B cell (primary cell): ENCODE measurements at regions of chr19 and their contacts with region 1.

Region 1: DNA sequence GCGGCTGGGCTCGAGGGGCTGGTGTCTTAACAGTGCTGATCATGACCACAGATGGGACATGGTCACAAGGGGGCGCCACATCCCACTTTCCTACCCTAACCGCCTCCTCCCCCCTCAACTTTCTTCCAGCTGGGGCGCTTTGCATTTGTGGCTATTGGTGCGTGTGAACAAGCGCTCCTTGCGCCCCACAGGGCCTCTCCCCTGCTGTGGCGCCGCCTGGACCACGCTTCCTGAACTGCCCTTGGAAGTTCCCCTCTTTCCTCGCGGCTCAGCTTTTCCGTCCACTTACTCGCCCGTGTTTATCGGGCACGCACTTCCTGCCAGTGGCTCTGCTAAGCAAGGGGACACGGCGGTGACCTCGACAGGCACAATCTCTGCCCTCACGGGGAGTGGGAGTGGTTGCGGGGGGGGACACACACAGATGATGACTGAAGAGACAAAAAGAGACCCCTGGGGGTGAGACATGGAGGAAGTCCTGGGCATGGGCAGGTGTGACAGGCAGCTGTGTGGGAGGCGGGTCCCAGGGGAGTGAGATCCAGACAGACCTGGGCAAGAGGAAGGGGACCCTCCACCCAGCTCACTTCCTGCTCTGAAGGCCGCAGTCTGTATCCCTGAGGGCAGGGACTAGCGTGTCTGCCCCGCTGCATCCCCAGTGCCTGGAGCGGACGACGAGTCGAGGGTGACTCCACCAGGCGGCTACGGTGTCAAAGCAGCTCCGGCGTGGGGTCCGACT is 40.3 kb downstream of the ZNF787 start:
- DNase-seq: peak; percentile 88
- ATAC-seq: peak; percentile 78
- H3K4me3 ChIP-seq: peak overlapping the region; percentile 13 to 74 (median 45)
- H3K4me3 Mint-ChIP-seq: peak overlapping the region; percentile 95
- H3K27ac ChIP-seq: no peak overlapping the region
- H3K27ac Mint-ChIP-seq: peak overlapping the region; percentile 75
- H3K4me1 ChIP-seq: peaks cover 12 to 16% of the 10 kb centered on the region in 2 donors
- H3K4me1 Mint-ChIP-seq: peaks cover 12% of the 10 kb centered on the region
- H3K27me3 ChIP-seq: no peaks in the 10 kb centered on the region
- H3K27me3 Mint-ChIP-seq: no peaks in the 10 kb centered on the region
- CTCF ChIP-seq: peak; percentile 70

Region 2: DNA sequence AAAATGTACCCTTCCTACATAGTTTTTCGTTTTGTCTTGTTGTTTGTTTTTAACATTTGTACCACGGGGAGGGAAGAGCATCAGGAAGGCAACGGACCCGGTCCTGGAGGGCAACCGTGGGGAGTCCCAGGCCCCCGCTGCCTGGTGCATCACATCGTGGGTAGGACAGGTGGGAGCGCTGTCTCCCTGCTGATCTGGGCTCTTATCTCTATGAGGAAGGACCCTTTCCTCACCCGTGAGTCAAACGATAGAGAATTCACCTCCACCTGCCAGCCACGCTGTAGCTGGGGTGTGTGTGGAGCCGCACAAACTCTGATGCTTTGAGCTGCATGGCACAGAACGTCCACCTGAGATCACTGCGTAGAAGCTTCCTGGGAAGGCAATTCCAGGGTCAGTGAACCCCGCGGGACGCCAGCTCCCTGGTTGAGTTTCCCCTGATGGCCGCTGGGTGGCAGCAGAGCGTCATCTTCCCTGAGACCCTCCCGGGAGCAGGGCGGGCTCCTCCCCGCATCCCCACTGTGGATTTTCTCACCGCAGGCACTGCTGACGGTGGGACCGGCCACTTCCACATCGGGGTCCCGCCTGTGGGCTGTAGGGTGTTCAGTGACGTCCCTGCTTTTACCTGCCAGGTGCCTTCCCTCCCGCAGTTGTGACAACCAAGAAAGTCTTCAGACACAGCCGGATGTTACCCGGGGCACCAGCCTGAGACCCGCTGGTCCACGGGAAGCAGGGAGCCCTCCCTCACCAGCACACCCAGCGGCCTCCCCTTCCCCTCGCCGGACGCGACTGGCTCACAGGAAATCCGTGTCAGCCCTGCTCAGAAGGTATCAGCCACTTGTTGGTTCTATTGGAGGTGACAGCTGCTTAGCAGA is 14.4 kb before region 1 on chr19:
- CTCF ChIA-PET with region 1: interaction called, 24 read pairs
- POLR2A ChIA-PET with region 1: no interaction called
- intact Hi-C with region 1: no loop called
- DNase-seq: peak; percentile 77
- ATAC-seq: peak; percentile 67
- H3K4me3 ChIP-seq: peak overlapping the region in 4 of 5 experiments; percentile 2 to 42 (median 36)
- H3K4me3 Mint-ChIP-seq: peak overlapping the region; percentile 71
- H3K27ac ChIP-seq: no peak overlapping the region
- H3K27ac Mint-ChIP-seq: no peak overlapping the region
- H3K4me1 ChIP-seq: peaks cover 9 to 10% of the 10 kb centered on the region in 2 donors
- H3K4me1 Mint-ChIP-seq: peaks cover 11% of the 10 kb centered on the region
- H3K27me3 ChIP-seq: peaks cover 0 to 7% (median 3%) of the 10 kb centered on the region in 4 experiments
- H3K27me3 Mint-ChIP-seq: peaks cover 36% of the 10 kb centered on the region
- CTCF ChIP-seq: peak; percentile 97

Region 3: GRCh38 chr19:56170261-56170660 is 89.4 kb after region 1 on chr19:
- CTCF ChIA-PET with region 1: interaction called, 196 read pairs
- POLR2A ChIA-PET with region 1: no interaction called
- intact Hi-C with region 1: loop called (anchors 1 kb)
- DNase-seq: no peak
- ATAC-seq: no peak
- H3K4me3 ChIP-seq: no peak overlapping the region
- H3K4me3 Mint-ChIP-seq: no peak overlapping the region
- H3K27ac ChIP-seq: no peak overlapping the region
- H3K27ac Mint-ChIP-seq: no peak overlapping the region
- H3K4me1 ChIP-seq: peaks cover 2 to 3% of the 10 kb centered on the region in 2 donors
- H3K4me1 Mint-ChIP-seq: peaks cover 2% of the 10 kb centered on the region
- H3K27me3 ChIP-seq: no peaks in the 10 kb centered on the region
- H3K27me3 Mint-ChIP-seq: peaks cover 18% of the 10 kb centered on the region
- CTCF ChIP-seq: no peak

Region 4: DNA sequence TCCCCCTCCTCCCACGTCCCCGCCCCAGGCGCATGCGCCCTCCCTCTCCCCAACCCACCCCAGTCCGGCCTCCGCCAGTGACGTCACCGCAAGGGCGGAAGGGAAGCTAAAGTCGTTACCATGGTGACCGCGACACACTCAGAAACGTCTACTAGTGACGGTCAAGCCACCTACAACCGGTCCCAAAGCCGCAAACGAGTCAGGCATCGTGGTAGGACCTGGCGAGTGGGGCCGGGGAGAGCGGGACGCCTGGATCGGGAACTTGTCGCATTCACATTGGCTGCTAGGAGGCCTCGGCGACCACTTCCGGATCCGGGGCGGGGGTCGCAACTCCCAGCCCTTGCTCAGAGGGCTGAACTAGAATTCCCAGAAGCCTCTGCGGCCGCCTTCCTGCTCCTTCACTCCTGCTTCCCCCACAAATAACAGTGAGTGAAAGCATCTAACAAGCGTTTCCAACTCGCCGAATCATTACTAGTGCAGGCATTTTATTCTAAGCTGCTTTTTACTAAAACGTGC is 233.8 kb after region 1 on chr19 and contains the start of gene ZSCAN5A:
- CTCF ChIA-PET with region 1: interaction called, 5 read pairs
- POLR2A ChIA-PET with region 1: no interaction called
- intact Hi-C with region 1: loop called (anchors 1 kb)
- DNase-seq: peak; percentile 99
- ATAC-seq: peak; percentile 77
- H3K4me3 ChIP-seq: peak within 1 kb of the TSS; percentile 67 to 84 (median 80)
- H3K4me3 Mint-ChIP-seq: peak within 1 kb of the TSS; percentile 95
- H3K27ac ChIP-seq: peak within 1 kb of the TSS; percentile 95 to 99
- H3K27ac Mint-ChIP-seq: peak within 1 kb of the TSS; percentile 94
- H3K4me1 ChIP-seq: peaks cover 12 to 13% of the 10 kb centered on the region in 2 donors
- H3K4me1 Mint-ChIP-seq: peaks cover 17% of the 10 kb centered on the region
- H3K27me3 ChIP-seq: no peaks in the 10 kb centered on the region
- H3K27me3 Mint-ChIP-seq: no peaks in the 10 kb centered on the region
- CTCF ChIP-seq: no peak
- total RNA-seq, gene ZSCAN5A: 20.5 and 24.8 TPM in 2 replicates

Region 5: DNA sequence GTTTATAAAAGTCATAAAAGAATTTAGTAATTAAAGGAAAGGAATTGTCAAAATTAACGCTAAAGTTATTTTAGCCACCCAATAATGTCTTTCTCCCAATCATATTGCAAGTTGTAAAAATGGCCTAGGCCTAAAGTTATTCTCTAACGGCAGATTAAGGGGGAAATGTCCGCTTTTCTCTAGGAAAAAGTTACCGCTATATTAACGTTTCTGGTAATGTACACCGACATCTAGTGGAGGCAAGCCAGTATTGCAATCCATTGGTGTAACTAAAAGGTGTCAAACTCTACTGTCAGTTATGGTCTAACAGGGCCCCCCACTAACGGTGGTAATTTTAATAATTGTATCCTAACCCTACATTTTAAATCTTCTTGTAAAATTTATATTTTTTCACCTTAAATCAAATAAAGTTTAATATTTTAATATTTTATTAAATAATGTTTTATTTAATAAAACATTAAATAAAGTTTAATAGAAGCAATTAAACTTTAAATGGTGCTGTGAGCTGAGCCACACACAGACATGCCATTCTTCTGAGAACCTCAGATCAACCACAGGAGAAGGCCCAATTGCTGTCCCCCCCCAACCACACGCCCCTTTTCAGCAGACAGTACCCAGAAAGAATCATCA is 269.7 kb after region 1 on chr19:
- CTCF ChIA-PET with region 1: interaction called, 12 read pairs
- POLR2A ChIA-PET with region 1: no interaction called
- intact Hi-C with region 1: loop called (anchors 1 kb)
- DNase-seq: peak; percentile 70
- ATAC-seq: peak; percentile 56
- H3K4me3 ChIP-seq: no peak overlapping the region
- H3K4me3 Mint-ChIP-seq: no peak overlapping the region
- H3K27ac ChIP-seq: no peak overlapping the region
- H3K27ac Mint-ChIP-seq: no peak overlapping the region
- H3K4me1 ChIP-seq: no peaks in the 10 kb centered on the region
- H3K4me1 Mint-ChIP-seq: peaks cover 2% of the 10 kb centered on the region
- H3K27me3 ChIP-seq: no peaks in the 10 kb centered on the region
- H3K27me3 Mint-ChIP-seq: no peaks in the 10 kb centered on the region
- CTCF ChIP-seq: peak; percentile 99